Left colon (tissue), 2 donors: ENCODE measurements at regions of chr2 and their contacts with region 1.

Region 1: DNA sequence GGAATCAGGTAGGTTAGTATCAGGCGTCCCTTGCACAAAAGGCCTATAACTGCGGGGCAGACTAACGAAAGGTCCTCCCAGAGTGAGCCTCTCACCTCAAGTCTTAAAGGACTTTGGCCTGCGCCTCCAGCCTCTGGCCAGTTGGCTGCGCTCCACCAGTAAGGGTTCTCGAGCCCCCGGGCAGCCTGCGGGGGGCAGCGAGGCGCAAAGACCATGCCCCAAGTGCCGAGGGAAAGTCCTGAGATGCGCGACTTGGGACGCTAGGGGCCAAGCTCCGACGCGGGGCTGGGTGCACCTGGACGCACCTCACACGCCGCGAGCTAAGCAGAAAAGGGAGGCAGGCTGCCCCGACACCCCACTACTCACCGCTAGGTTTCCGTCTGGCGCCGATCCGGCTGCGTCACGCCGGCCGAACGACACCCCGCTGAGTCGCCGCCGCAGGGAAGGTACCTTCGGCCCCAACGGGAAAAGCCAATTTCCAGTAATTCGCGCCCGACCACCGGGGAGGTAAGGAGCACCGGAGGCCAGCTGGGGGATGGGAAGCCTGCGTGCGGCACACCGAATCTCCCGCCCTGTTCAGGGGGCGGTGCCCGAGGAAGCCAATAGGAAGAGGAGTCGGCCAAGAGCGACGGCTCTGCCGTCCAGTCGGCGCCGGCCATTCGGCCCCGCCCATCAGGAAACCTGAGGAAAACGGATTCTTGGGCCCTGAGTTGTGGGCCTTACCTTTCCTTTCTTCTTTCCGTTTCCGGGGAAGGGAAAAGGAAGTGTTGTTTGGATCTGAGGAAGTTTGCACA is at the start of gene ORC2:
- DNase-seq: peak; percentile 96 to 97
- ATAC-seq: peak; percentile 91
- total RNA-seq, gene ORC2: 25.5 to 26.8 TPM

Region 2: GRCh38 chr2:201059961-201060755 is 96.8 kb after region 1 on chr2:
- intact Hi-C with region 1: loop called in 1 of 2 experiments (anchors 10 kb)
- DNase-seq: no peak
- ATAC-seq: no peak